ENCODE measurements at regions of chr14 and their contacts with region 1.

Region 1: DNA sequence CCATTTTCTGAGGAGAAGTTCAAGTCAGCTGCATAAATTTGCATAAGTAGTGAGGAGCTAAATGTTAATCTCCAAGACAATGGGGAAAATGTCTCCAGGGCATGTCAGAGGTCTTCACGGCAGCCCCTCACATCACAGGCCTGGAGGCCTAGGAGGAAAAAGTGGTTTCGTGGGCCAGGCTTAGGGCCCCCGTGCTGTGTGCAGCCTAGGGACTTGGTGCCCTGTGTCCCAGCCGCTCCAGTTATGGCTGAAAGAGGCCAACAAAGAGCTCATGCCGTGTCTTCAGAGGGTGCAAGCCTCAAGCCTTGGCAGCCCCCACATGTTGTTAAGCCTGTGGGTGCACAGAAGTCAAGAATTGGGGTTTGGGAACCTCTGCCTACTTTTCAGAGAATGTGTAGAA is 41.9 kb upstream of the RD3L start:
- DNase-seq: no peak
- H3K4me3 ChIP-seq: no peak overlapping the region
- H3K4me3 Mint-ChIP-seq: no peak overlapping the region
- H3K27ac Mint-ChIP-seq: no peak overlapping the region
- H3K4me1 ChIP-seq: no peaks in the 10 kb centered on the region
- H3K4me1 Mint-ChIP-seq: no peaks in the 10 kb centered on the region
- H3K27me3 ChIP-seq: no peaks in the 10 kb centered on the region
- H3K27me3 Mint-ChIP-seq: peaks cover 5% of the 10 kb centered on the region
- CTCF ChIP-seq: no peak

Region 2: GRCh38 chr14:103808403-103809001 is 175.7 kb before region 1 on chr14:
- CTCF ChIA-PET with region 1: interaction called, 10 read pairs
- POLR2A ChIA-PET with region 1: no interaction called
- intact Hi-C with region 1: loop called (anchors 1 kb)
- DNase-seq: peak; percentile 69 to 85
- H3K4me3 ChIP-seq: no peak overlapping the region
- H3K4me3 Mint-ChIP-seq: no peak overlapping the region
- H3K27ac Mint-ChIP-seq: no peak overlapping the region
- H3K4me1 ChIP-seq: no peaks in the 10 kb centered on the region
- H3K4me1 Mint-ChIP-seq: no peaks in the 10 kb centered on the region
- H3K27me3 ChIP-seq: no peaks in the 10 kb centered on the region
- H3K27me3 Mint-ChIP-seq: no peaks in the 10 kb centered on the region
- CTCF ChIP-seq: peak; percentile 87 to 90

Region 3: DNA sequence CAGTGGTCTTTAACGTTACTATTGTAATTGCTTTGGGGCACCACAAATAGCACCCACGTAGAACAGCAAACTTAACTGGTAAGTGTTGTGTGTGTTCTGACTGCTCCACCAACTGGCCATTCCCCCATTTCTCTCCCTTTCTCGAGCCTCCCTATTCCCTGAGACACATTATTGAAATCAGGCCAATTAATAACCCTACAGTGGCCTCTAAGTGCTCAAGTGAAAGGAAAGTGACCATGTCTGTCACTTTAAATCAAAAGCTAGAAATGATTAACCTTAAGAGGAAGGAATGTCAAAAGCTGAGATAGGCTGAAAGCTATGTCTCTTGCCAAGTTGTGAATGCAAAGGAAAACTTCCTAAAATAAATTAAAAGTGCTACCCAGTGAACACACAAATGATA is 159.1 kb before region 1 on chr14:
- CTCF ChIA-PET with region 1: interaction called, 12 read pairs
- POLR2A ChIA-PET with region 1: no interaction called
- intact Hi-C with region 1: no loop called
- DNase-seq: no peak
- H3K4me3 ChIP-seq: no peak overlapping the region
- H3K4me3 Mint-ChIP-seq: no peak overlapping the region
- H3K27ac Mint-ChIP-seq: peak overlapping the region; percentile 51
- H3K4me1 ChIP-seq: peaks cover 9% of the 10 kb centered on the region; the same call in 1 of the 2 replicates
- H3K4me1 Mint-ChIP-seq: peaks cover 9% of the 10 kb centered on the region
- H3K27me3 ChIP-seq: no peaks in the 10 kb centered on the region
- H3K27me3 Mint-ChIP-seq: no peaks in the 10 kb centered on the region
- CTCF ChIP-seq: no peak

Region 4: DNA sequence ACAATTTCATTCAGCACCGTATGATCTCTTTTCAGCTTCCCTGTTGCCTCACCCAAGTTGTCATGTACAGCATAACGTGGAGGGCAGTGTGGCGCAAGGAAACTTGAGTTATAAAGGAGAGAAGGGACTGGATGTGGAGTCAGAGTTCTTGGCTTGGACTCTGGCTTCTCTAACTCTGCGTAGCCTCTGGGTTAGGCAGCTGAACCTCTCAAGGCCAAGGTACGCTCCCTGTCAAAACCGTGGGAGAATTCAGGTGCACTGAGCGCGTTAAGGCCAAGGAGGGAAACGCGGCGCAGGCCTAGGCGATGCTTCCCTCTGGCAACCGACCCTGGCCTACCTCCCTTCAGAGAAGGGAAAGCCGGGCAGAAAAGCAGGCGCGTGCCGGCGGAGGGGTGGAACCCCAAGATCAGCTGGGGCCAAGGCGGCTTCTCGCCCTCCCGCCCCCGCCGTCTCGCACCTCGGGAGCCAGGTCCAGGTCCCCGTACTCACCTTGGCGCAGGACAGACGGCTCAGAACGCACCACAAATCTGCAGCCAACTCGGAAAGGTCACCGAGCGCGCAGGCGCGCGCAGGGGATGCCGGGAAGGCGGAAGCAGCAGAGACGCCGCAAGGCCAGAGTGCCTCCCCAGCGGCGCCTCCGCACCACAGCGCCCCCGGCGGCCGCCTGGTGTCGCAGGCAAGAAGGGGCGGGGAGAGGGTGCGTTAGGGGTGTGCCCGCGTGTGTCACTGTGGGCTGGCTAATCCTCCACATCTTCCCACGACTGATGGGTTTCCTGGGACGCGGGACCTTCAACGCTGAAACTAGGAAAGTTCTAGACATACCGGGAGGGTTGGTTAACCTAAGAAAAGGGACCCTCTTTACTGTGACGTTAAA is 63.0 kb before region 1 on chr14:
- CTCF ChIA-PET with region 1: no interaction called
- POLR2A ChIA-PET with region 1: no interaction called
- intact Hi-C with region 1: loop called (anchors 5 kb)
- DNase-seq: peak; percentile 92 to 96
- H3K4me3 ChIP-seq: peak overlapping the region; percentile 73
- H3K4me3 Mint-ChIP-seq: peak overlapping the region; percentile 94
- H3K27ac Mint-ChIP-seq: peak overlapping the region; percentile 91
- H3K4me1 ChIP-seq: no peaks in the 10 kb centered on the region
- H3K4me1 Mint-ChIP-seq: no peaks in the 10 kb centered on the region
- H3K27me3 ChIP-seq: no peaks in the 10 kb centered on the region
- H3K27me3 Mint-ChIP-seq: no peaks in the 10 kb centered on the region
- CTCF ChIP-seq: peak; percentile 90 to 96

Region 5: GRCh38 chr14:104157016-104157928 is 173.1 kb after region 1 on chr14:
- CTCF ChIA-PET with region 1: no interaction called
- POLR2A ChIA-PET with region 1: no interaction called
- intact Hi-C with region 1: no loop called
- DNase-seq: no peak
- H3K4me3 ChIP-seq: no peak overlapping the region
- H3K4me3 Mint-ChIP-seq: no peak overlapping the region
- H3K27ac Mint-ChIP-seq: no peak overlapping the region
- H3K4me1 ChIP-seq: no peaks in the 10 kb centered on the region
- H3K4me1 Mint-ChIP-seq: no peaks in the 10 kb centered on the region
- H3K27me3 ChIP-seq: no peaks in the 10 kb centered on the region
- H3K27me3 Mint-ChIP-seq: peaks cover 3% of the 10 kb centered on the region
- CTCF ChIP-seq: peak in 1 of 2 experiments; percentile 4